Endothelial cell of umbilical vein (primary cell): ENCODE measurements at regions of chr15 and their contacts with region 1.

Region 1: DNA sequence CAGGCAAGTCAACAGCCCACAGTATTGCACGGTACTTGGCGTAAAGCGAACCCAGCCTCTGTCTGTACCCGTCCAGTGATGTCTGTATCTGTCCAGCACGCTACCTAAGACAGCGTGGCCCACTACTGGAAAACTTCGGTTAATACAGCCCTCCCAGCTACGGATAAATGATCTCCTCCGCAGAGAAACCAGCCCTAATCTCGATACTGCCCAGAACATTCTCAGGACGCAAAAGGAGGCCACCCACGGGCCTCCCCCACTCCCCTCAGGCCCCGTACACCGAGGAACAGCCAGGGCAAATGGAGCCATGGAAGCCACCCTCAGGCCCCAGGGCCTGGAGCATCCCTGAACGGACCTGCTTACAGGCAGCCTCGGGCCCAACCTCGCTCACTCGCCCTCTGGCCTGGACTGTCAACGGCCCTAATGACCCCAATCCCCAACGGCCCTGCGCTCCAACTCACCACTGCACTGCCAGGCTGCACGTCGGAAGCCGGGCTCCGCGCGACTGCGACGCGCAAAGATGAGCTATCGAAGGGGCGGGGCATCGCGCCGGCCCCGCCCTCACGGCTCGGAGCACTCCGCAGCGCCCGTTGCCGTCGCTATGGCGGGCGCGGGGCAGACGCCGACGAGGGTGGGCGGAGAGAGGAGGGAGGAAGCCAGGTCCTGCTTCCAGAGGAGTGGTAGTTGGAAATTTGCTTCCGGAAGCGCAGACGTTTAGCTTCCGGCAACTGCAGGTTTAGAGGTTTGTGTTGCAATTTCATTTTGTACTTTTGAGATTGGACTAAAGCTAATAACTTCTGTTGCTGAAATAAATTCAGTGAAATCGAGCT is at the start of gene SKIC8:
- DNase-seq: peak; percentile 95
- H3K4me3 ChIP-seq: peak within 1 kb of the TSS; percentile 68 to 100 (median 81)
- H3K27ac ChIP-seq: peak within 1 kb of the TSS; percentile 43
- H3K4me1 ChIP-seq: peaks cover 4% of the 10 kb centered on the region
- H3K27me3 ChIP-seq: peaks cover 2 to 5% of the 10 kb centered on the region in 2 experiments
- CTCF ChIP-seq: no peak
- POLR2A ChIP-seq: peak; percentile 94
- total RNA-seq, gene SKIC8: 49.0 and 49.7 TPM in 2 replicates

Region 2: GRCh38 chr15:78149068-78149804 is 150.1 kb before region 1 on chr15 and contains the start of gene IDH3A:
- CTCF ChIA-PET with region 1: no interaction called
- POLR2A ChIA-PET with region 1: interaction called, 3 read pairs
- dilution Hi-C with region 1: no loop called
- intact Hi-C with region 1: loop called (anchors 1 kb)
- DNase-seq: peak; percentile 95
- H3K4me3 ChIP-seq: peak within 1 kb of the TSS; percentile 54 to 94 (median 71)
- H3K27ac ChIP-seq: peak within 1 kb of the TSS; percentile 81
- H3K4me1 ChIP-seq: peaks cover 11% of the 10 kb centered on the region
- H3K27me3 ChIP-seq: no peaks in the 10 kb centered on the region
- CTCF ChIP-seq: no peak
- POLR2A ChIP-seq: peak; percentile 64
- total RNA-seq, gene IDH3A: 62.8 and 63.9 TPM in 2 replicates

Region 3: GRCh38 chr15:78264304-78265136 is 34.8 kb before region 1 on chr15 and contains the start of gene DNAJA4:
- CTCF ChIA-PET with region 1: interaction called, 11 read pairs
- POLR2A ChIA-PET with region 1: interaction called, 4 read pairs
- dilution Hi-C with region 1: no loop called
- intact Hi-C with region 1: no loop called
- DNase-seq: peak; percentile 42
- H3K4me3 ChIP-seq: peak within 1 kb of the TSS; percentile 44 to 64 (median 57)
- H3K27ac ChIP-seq: peak within 1 kb of the TSS; percentile 41
- H3K4me1 ChIP-seq: peaks cover 7% of the 10 kb centered on the region
- H3K27me3 ChIP-seq: no peaks in the 10 kb centered on the region
- CTCF ChIP-seq: peak in 1 of 2 donors; percentile 26
- POLR2A ChIP-seq: peak; percentile 39
- total RNA-seq, gene DNAJA4: 20.2 and 21.3 TPM in 2 replicates

Region 4: DNA sequence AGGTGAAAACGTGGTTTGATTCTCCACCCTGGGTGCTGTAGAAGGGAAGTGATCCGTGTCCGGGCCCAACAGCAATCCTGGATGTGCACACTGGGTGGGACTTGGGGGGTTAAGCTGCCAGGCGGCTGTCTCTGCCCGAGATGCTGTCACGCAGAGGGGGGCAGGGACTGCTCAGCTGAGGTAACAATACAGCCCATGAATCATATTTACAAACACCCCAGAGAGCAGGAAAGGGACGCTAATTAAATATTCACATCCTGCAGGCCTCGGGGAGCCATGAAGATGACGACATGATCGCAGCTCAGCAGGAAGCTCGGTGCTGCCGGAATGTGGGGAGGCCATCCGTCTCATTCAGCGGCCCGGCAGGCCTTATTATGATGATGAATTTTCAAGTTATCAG is 22.9 kb after region 1 on chr15:
- CTCF ChIA-PET with region 1: no interaction called
- POLR2A ChIA-PET with region 1: no interaction called
- dilution Hi-C with region 1: no loop called
- intact Hi-C with region 1: loop called (anchors 1 kb)
- DNase-seq: peak; percentile 92
- H3K4me3 ChIP-seq: no peak overlapping the region
- H3K27ac ChIP-seq: peak overlapping the region; percentile 92
- H3K4me1 ChIP-seq: peaks cover 16% of the 10 kb centered on the region
- H3K27me3 ChIP-seq: no peaks in the 10 kb centered on the region
- CTCF ChIP-seq: no peak
- POLR2A ChIP-seq: peak; percentile 60

Region 5: GRCh38 chr15:78422571-78423340 is 123.4 kb after region 1 on chr15:
- CTCF ChIA-PET with region 1: interaction called, 367 read pairs
- POLR2A ChIA-PET with region 1: no interaction called
- dilution Hi-C with region 1: no loop called
- intact Hi-C with region 1: no loop called
- DNase-seq: peak; percentile 71
- H3K4me3 ChIP-seq: no peak overlapping the region
- H3K27ac ChIP-seq: no peak overlapping the region
- H3K4me1 ChIP-seq: no peaks in the 10 kb centered on the region
- H3K27me3 ChIP-seq: peaks cover 9% of the 10 kb centered on the region in 2 experiments
- CTCF ChIP-seq: peak; percentile 91
- POLR2A ChIP-seq: no peak

Region 6: DNA sequence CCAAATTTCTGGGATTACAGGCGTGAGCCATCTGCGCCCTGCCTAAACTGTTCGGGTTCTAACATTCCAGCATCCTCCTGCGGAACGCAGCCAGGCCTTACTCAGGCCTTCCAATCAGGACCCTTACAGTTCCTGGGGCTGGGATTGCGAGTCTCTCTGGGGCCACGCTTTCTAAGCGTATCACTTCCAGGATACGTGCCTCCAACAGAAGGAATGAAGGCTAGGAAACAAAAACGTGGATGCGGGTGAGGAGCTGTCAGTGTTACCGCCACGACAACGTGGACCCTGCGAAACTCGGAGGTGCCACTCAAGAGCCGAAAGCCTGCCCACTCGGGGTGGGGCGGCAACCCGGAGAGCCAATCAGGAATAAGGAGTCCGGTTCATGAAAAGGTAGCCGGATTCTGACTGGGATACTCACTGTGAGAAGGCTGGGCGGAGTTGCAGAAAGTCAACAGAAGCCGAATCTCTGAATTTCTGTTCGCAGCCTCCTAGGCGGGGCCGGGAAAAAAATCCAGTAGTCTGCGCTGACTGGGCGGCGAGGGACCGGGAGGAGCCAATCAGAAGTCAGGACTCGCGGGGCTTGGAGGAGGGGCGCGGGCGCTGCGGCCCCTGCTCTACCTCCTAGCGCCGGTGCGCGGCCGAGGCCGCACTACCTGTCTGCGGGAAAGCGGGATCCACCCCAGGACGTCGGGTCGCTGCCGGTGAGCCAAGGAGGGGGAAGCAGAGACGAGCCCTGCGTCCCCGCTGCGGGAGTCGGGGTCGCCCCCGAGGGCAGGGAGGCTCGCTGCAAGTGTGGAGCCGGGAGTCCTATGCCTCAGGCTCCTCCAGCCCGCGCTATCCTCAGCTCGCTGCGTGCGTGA is 207.9 kb after region 1 on chr15 and contains the start of gene HYKK:
- CTCF ChIA-PET with region 1: no interaction called
- POLR2A ChIA-PET with region 1: no interaction called
- dilution Hi-C with region 1: no loop called
- intact Hi-C with region 1: loop called (anchors 2 kb)
- DNase-seq: peak; percentile 98
- H3K4me3 ChIP-seq: peak within 1 kb of the TSS; percentile 35 to 65 (median 65)
- H3K27ac ChIP-seq: no peak within 1 kb of the TSS
- H3K4me1 ChIP-seq: peaks cover 4% of the 10 kb centered on the region
- H3K27me3 ChIP-seq: peaks cover 3 to 4% of the 10 kb centered on the region in 2 experiments
- CTCF ChIP-seq: peak in 1 of 2 donors; percentile 21
- POLR2A ChIP-seq: no peak
- total RNA-seq, gene HYKK: 2.1 and 2.7 TPM in 2 replicates

Region 7: GRCh38 chr15:78702609-78703333 is 403.5 kb after region 1 on chr15:
- CTCF ChIA-PET with region 1: no interaction called
- POLR2A ChIA-PET with region 1: no interaction called
- dilution Hi-C with region 1: no loop called
- intact Hi-C with region 1: loop called (anchors 2 kb)
- DNase-seq: no peak
- H3K4me3 ChIP-seq: no peak overlapping the region
- H3K27ac ChIP-seq: no peak overlapping the region
- H3K4me1 ChIP-seq: no peaks in the 10 kb centered on the region
- H3K27me3 ChIP-seq: peaks cover 6 to 18% of the 10 kb centered on the region in 2 experiments
- CTCF ChIP-seq: no peak
- POLR2A ChIP-seq: no peak